ENCODE measurements at regions of chr1 and their contacts with region 1.

Region 1: GRCh38 chr1:156319664-156320063 is 18.4 kb downstream of the CCT3 start:
- DNase-seq: no peak
- H3K4me3 ChIP-seq: no peak overlapping the region
- H3K27ac ChIP-seq: no peak overlapping the region
- H3K4me1 ChIP-seq: no peaks in the 10 kb centered on the region
- H3K27me3 ChIP-seq: no peaks in the 10 kb centered on the region
- CTCF ChIP-seq: peak; percentile 37 to 49

Region 2: GRCh38 chr1:156146020-156146768 is 173.5 kb before region 1 on chr1:
- CTCF ChIA-PET with region 1: no interaction called
- dilution Hi-C with region 1: no loop called
- in situ Hi-C with region 1: no loop called
- intact Hi-C with region 1: loop called (anchors 2 kb)
- DNase-seq: peak; percentile 93
- H3K4me3 ChIP-seq: no peak overlapping the region
- H3K27ac ChIP-seq: no peak overlapping the region
- H3K4me1 ChIP-seq: peaks cover 10% of the 10 kb centered on the region
- H3K27me3 ChIP-seq: no peaks in the 10 kb centered on the region
- CTCF ChIP-seq: peak; percentile 67 to 74

Region 3: DNA sequence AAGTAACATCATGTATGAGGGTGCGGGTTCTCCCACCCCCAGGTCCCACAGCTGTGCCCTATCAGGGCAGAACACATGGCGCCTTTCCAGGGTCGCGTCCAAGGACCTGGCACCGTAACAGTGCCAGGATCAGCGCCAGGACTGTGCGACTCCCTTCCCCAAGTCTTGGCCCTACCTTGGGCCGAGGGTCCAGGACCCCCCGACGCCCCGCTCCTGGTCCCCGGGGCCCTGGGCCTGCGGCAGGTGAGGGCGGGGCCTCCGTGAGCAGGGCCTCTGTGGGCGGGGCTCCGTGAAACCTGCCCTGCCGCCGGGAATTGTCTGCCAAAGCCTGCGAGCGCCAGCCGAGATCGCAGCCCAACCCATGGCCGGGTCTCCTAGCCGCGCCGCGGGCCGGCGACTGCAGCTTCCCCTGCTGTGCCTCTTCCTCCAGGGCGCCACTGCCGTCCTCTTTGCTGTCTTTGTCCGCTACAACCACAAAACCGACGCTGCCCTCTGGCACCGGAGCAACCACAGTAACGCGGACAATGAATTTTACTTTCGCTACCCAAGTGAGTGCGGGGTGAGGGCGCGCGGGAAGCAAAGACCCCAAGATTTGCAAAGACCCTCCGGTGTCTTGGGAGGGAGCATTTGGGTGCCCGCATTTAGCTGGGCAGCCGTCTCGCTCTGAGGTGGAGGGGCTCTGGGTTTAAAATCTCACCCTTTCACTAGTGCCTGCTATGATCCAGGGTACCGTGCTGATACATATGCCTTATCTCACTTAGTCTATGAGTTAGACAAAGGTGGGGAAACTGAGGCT is 49.4 kb after region 1 on chr1 and contains the start of gene RHBG:
- CTCF ChIA-PET with region 1: no interaction called
- dilution Hi-C with region 1: no loop called
- in situ Hi-C with region 1: no loop called
- intact Hi-C with region 1: no loop called
- DNase-seq: peak; percentile 35
- H3K4me3 ChIP-seq: peak within 1 kb of the TSS; percentile 41 to 58 (median 56)
- H3K27ac ChIP-seq: no peak within 1 kb of the TSS
- H3K4me1 ChIP-seq: peaks cover 5% of the 10 kb centered on the region
- H3K27me3 ChIP-seq: no peaks in the 10 kb centered on the region
- CTCF ChIP-seq: no peak
- total RNA-seq, gene RHBG: not detected